ENCODE measurements at regions of chr5 and their contacts with region 1.

Region 1: DNA sequence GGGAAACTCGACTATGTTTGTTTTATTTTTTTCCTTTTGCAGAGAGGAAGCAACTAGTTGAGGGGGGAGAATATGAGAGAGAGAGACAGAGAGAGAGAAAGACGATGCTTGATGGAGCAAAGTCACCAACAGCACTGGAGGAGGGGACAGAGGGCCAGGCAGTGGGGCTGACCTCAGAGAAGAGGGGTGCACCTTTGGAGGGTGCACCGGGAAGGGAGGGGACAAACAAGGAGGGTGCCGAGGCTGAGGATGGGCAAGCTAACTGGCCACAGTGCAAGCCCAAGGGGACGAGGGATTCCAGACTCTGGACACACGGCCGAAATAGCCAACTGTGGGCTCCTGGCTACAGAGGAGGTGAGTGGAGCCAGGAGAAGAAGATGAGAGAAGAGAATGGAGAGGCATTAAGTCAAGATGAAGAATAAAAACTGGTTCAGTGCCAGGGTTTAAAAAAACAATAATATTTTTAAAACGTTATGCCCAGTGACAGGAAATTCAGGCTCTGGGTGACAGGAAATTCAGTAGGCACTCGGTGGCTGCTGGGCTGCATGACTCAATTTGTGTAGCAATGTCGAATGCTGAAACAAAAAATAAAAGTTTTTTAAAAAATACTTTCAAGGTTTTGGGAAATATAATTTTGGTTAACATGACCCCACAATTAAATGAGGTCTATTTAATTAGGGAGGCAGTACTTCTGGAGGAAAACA is 13.3 kb upstream of the GLRX start:
- DNase-seq: peak in 1 of 2 donors; percentile 67
- ATAC-seq: peak in 2 of 3 donors; percentile 31 to 32
- H3K4me3 ChIP-seq: peak overlapping the region; percentile 78
- H3K4me3 Mint-ChIP-seq: peak overlapping the region; percentile 94
- H3K27ac ChIP-seq: peak overlapping the region; percentile 91
- H3K27ac Mint-ChIP-seq: peak overlapping the region; percentile 79 to 93
- H3K4me1 ChIP-seq: peaks cover 17% of the 10 kb centered on the region
- H3K4me1 Mint-ChIP-seq: peaks cover 44 to 45% of the 10 kb centered on the region in 2 donors
- H3K27me3 ChIP-seq: no peaks in the 10 kb centered on the region
- H3K27me3 Mint-ChIP-seq: no peaks in the 10 kb centered on the region
- CTCF ChIP-seq: no peak

Region 2: GRCh38 chr5:95730730-95731570 is 104.9 kb before region 1 on chr5 and contains the start of gene RHOBTB3:
- intact Hi-C with region 1: loop called (anchors 5 kb)
- DNase-seq: peak; percentile 55 to 59
- ATAC-seq: peak; percentile 82 to 87 (median 84)
- H3K4me3 ChIP-seq: peak within 1 kb of the TSS; percentile 77
- H3K4me3 Mint-ChIP-seq: peak within 1 kb of the TSS; percentile 94
- H3K27ac ChIP-seq: peak within 1 kb of the TSS; percentile 49
- H3K27ac Mint-ChIP-seq: peak within 1 kb of the TSS; percentile 83 to 92
- H3K4me1 ChIP-seq: peaks cover 8% of the 10 kb centered on the region
- H3K4me1 Mint-ChIP-seq: peaks cover 54 to 72% of the 10 kb centered on the region in 2 donors
- H3K27me3 ChIP-seq: no peaks in the 10 kb centered on the region
- H3K27me3 Mint-ChIP-seq: no peaks in the 10 kb centered on the region
- CTCF ChIP-seq: no peak
- total RNA-seq, gene RHOBTB3: 46.5 to 55.1 (median 46.5) TPM

Region 3: DNA sequence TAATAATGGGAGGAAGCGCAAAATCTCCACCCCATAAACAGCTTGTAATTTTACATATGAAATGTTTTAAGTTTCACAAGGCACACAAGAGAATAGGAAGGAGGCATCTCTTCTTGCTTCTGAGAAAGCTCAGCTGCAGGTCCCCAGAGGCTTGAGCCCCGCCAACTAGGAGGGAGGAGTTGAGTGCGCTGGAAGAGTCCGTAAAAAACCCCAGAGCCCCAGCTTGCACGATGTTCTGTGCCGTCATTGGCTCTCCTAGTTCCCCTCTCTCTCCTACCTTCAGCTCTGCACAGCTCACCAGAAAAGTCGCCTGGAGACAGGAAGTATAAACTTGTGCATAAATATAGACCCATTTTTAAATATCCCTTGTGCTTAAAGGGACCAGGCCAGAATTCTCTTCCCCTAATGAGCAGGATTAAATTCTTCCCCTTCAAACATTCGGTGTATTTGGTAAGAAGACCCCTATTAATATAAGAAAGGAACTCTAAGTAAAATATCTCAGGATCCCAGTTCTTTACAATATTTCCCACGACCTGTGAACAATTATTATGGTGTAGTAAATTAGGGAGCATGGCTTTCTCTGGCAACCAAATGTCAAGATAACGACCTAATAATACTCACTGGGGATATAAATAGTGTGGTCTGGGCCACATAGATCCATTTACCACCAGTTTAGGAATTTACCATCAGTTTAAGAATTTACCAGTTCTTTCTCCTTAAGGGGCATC is 27.0 kb before region 1 on chr5:
- intact Hi-C with region 1: loop called (anchors 2 kb)
- DNase-seq: peak; percentile 60 to 94
- ATAC-seq: peak; percentile 99 to 100 (median 100)
- H3K4me3 ChIP-seq: no peak overlapping the region
- H3K4me3 Mint-ChIP-seq: peak overlapping the region; percentile 77
- H3K27ac ChIP-seq: peak overlapping the region; percentile 77
- H3K27ac Mint-ChIP-seq: peak overlapping the region; percentile 81 to 94
- H3K4me1 ChIP-seq: peaks cover 44% of the 10 kb centered on the region
- H3K4me1 Mint-ChIP-seq: peaks cover 56 to 58% of the 10 kb centered on the region in 2 donors
- H3K27me3 ChIP-seq: no peaks in the 10 kb centered on the region
- H3K27me3 Mint-ChIP-seq: no peaks in the 10 kb centered on the region
- CTCF ChIP-seq: no peak

Region 4: DNA sequence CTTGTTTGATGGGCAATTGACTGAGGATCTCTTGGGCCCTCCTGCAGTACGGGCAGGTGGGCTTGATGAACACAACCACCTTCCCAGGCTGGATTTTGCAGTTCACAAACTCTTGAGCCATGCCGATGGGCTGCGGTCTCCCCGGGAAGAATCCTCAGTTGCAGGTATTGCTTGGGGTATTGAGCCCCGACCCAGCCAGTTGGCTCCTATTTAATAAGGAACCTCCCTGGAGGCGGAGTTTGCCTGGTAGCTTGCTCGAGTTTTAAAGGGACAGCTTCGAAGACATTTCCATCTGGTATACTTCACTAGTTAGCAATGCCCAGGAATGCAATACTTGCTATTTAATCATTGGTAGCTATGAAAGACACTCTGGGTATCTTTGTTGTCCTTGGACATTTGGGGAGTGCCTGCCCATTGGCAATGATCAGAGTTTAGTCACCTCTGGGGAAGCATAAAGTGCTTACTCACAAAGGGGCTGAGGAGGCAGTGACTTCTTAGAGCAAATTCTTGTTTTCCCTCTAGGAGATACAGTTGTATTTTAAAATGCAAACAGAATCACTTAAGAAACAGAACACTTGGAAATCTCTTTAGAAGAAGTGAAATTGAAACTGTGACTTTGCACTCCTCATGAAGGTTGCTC is 13.2 kb before region 1 on chr5 and contains the start of gene GLRX:
- intact Hi-C with region 1: loop called (anchors 1 kb)
- DNase-seq: peak in 1 of 2 donors; percentile 75
- ATAC-seq: peak; percentile 22 to 40 (median 37)
- H3K4me3 ChIP-seq: peak within 1 kb of the TSS; percentile 76
- H3K4me3 Mint-ChIP-seq: peak within 1 kb of the TSS; percentile 99
- H3K27ac ChIP-seq: peak within 1 kb of the TSS; percentile 86
- H3K27ac Mint-ChIP-seq: peak within 1 kb of the TSS; percentile 81 to 92
- H3K4me1 ChIP-seq: peaks cover 64% of the 10 kb centered on the region
- H3K4me1 Mint-ChIP-seq: peaks cover 75 to 77% of the 10 kb centered on the region in 2 donors
- H3K27me3 ChIP-seq: no peaks in the 10 kb centered on the region
- H3K27me3 Mint-ChIP-seq: no peaks in the 10 kb centered on the region
- CTCF ChIP-seq: no peak
- total RNA-seq, gene GLRX: 59.2 to 102 (median 62.5) TPM

Region 5: DNA sequence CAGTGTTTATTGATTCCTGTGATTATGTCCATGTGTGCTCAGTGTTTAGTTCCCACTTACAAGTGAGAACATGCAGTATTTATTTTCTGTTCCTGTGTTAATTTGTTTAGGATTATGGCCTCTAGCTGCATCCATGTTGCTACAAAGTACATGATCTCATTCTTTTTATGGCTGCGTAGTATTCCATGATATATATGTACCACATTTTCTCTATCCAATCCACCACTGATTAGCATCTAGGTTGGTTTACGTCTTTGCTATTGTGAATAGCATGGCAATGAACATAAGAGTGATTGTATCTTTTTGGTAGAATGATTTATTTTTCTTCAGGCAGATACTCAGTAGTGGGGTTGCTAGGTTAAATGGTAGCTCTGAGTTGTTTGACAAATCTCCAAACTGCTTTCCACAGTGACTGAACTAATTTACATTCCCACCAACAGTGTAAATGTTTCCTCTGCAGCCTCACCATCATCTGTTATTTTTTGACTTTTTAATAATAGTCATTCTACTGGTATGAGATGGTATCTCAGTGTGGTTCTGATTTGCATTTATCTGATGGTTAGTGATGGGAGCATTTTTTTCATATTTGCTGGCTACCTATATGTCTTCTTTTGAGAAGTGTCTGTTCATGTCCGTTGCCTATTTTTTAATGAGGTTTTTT is 173.3 kb after region 1 on chr5:
- intact Hi-C with region 1: no loop called
- DNase-seq: no peak
- ATAC-seq: no peak
- H3K4me3 ChIP-seq: no peak overlapping the region
- H3K4me3 Mint-ChIP-seq: no peak overlapping the region
- H3K27ac ChIP-seq: no peak overlapping the region
- H3K27ac Mint-ChIP-seq: no peak overlapping the region
- H3K4me1 ChIP-seq: no peaks in the 10 kb centered on the region
- H3K4me1 Mint-ChIP-seq: no peaks in the 10 kb centered on the region
- H3K27me3 ChIP-seq: no peaks in the 10 kb centered on the region
- H3K27me3 Mint-ChIP-seq: peaks cover 0 to 9% of the 10 kb centered on the region in 2 donors
- CTCF ChIP-seq: no peak

Measured in natural killer cell (primary cell).